Endothelial cell of umbilical vein (primary cell): ENCODE measurements at regions of chr10 and their contacts with region 1.

Region 1: DNA sequence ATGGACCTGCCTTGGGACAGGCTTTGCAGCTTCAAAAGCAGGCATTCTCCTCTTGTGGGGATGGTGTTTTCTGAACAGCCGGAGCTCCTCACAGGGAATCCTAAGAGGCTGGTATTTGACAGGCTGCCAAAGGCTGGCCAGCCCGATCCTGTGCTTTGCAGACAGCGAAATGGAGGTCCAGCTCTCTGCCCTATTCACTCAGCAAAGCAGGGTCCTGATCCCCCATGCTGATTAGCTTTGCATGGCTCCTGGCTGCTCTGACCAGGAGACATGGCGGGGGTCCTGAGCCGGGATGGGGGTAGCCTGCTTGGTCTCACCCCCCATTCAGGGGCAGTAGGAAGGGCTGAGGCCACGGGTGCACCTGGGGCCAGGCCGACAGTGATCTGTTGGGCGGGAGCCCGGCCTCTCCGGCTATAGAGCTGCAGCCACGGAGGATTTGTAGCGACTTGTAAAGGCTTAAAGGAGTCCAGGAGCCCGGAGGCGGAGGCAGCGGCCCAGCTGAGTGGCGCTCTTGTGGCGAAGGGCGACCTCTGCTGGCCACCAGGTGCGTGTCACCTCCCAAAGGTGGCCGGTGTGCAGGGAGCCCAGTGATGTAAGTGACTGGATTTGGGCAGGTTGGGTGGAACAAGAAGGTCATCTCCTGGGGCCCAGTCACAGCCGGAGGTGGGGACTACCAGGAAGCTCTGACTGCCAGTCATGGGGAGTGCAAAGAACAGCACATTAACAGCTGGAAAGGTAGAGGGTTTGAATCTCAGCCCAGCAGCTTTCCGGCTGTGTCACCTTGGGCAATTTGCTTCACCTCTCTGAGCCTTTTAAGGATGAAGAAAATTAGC is 126.5 kb downstream of the ZMIZ1 start:
- DNase-seq: peak; percentile 84
- H3K4me3 ChIP-seq: no peak overlapping the region
- H3K27ac ChIP-seq: no peak overlapping the region
- H3K4me1 ChIP-seq: peaks cover 17% of the 10 kb centered on the region
- H3K27me3 ChIP-seq: no peaks in the 10 kb centered on the region
- CTCF ChIP-seq: peak; percentile 88 to 93
- POLR2A ChIP-seq: no peak

Region 2: DNA sequence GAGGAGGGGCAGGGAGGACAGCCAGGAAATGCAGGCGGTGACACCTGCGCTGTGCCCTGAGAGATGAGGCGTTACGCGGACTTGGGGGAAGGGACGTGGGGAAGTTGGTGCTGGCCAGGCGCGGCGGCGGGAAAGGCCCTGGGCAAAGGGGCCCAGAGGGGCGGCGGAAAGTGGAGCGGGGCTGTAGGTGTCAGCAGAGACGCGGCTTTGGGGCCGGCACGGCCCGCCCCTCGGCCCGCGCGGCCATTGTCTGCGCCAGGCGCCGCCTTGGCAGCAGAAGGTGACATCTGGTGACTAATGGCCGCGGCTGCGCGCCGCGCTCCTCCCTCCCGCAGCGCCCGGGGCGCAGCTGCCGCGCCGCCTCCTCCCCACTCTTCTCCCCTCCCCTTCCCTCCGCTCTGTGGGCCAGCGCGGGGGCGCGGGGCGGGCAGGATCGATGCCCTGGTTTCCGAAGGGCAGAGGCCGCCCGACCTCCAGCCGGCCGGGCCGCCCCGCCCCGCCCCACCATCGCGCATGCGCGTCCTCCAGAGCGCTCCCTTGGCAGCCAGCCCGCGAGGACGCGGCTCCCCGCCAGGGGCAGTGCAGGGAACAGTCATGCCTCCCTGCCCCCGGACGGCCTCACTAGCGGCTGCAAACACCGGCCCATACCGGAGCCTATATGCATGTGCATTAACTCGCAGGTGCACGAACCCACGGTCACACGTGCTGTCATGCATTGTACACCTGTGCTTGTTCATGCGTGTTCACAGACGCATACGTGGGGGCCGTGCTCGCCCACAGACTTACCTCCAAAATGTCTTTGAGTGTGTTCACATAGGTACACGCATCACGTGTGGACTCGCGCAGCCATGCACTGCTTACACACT is 892.1 kb before region 1 on chr10:
- CTCF ChIA-PET with region 1: interaction called, 3 read pairs
- POLR2A ChIA-PET with region 1: no interaction called
- dilution Hi-C with region 1: no loop called
- intact Hi-C with region 1: loop called (anchors 5 kb)
- DNase-seq: peak; percentile 97
- H3K4me3 ChIP-seq: peak overlapping the region; percentile 31 to 59 (median 44)
- H3K27ac ChIP-seq: peak overlapping the region; percentile 76
- H3K4me1 ChIP-seq: peaks cover 7% of the 10 kb centered on the region
- H3K27me3 ChIP-seq: peaks cover 8 to 11% of the 10 kb centered on the region in 2 experiments
- CTCF ChIP-seq: peak; percentile 69 to 87
- POLR2A ChIP-seq: peak; percentile 67

Region 3: GRCh38 chr10:78756604-78757349 is 438.5 kb before region 1 on chr10:
- CTCF ChIA-PET with region 1: interaction called, 3 read pairs
- POLR2A ChIA-PET with region 1: no interaction called
- dilution Hi-C with region 1: no loop called
- intact Hi-C with region 1: loop called (anchors 5 kb)
- DNase-seq: peak; percentile 95
- H3K4me3 ChIP-seq: no peak overlapping the region
- H3K27ac ChIP-seq: peak overlapping the region; percentile 54
- H3K4me1 ChIP-seq: peaks cover 34% of the 10 kb centered on the region
- H3K27me3 ChIP-seq: peaks cover 0 to 6% of the 10 kb centered on the region in 2 experiments
- CTCF ChIP-seq: no peak
- POLR2A ChIP-seq: no peak

Region 4: GRCh38 chr10:79052291-79053080 is 142.8 kb before region 1 on chr10:
- CTCF ChIA-PET with region 1: interaction called, 20 read pairs
- POLR2A ChIA-PET with region 1: no interaction called
- dilution Hi-C with region 1: no loop called
- intact Hi-C with region 1: no loop called
- DNase-seq: peak; percentile 34
- H3K4me3 ChIP-seq: no peak overlapping the region
- H3K27ac ChIP-seq: no peak overlapping the region
- H3K4me1 ChIP-seq: no peaks in the 10 kb centered on the region
- H3K27me3 ChIP-seq: no peaks in the 10 kb centered on the region
- CTCF ChIP-seq: peak; percentile 33 to 66
- POLR2A ChIP-seq: no peak

Region 5: DNA sequence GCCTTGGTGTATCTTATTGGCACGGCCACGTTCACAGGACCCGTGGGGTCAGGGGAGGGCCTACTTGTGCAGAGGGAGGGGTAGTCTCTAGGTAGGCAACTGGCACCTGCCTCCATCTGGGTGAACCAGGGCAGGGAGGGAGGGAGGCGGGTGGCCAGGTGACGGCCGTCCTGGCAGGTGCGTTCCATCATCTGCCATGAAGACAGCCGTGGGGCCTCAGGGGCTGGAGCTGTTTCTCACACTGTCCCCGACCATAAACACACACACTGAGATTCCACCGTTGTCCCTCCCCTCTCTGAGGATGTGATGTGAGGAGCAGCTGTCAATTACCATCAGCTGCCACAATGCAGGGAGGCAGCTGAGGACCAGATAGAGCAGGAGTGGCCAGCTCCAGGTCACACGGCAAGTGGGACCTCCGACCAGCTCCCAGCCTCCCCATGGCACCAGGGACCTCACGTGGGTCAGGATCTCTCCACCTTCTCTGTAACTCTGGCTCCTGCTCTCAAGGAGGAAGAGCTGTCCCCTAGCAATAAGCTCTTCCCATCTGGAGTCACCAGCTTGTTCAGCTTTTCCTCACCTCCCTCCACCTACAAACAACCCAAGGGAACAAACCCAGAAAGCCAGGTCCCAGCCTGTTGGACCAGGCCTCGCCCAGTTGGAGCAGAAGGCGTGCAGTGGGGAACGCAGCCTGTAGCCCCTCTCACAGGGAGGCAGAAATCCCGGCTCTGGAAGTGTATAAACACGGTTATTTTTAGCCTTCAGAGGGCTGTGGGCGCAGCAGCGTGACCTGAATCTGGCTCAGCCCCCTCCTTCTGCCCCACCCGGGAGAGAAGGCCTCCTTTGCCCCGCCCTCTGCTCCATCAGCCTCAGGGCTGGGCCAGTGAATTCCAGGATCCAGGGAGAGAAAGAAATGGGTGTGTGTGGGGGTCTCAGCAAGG is 93.5 kb before region 1 on chr10:
- CTCF ChIA-PET with region 1: interaction called, 13 read pairs
- POLR2A ChIA-PET with region 1: no interaction called
- dilution Hi-C with region 1: no loop called
- intact Hi-C with region 1: no loop called
- DNase-seq: no peak
- H3K4me3 ChIP-seq: no peak overlapping the region
- H3K27ac ChIP-seq: no peak overlapping the region
- H3K4me1 ChIP-seq: peaks cover 17% of the 10 kb centered on the region
- H3K27me3 ChIP-seq: no peaks in the 10 kb centered on the region
- CTCF ChIP-seq: no peak
- POLR2A ChIP-seq: no peak

Region 6: DNA sequence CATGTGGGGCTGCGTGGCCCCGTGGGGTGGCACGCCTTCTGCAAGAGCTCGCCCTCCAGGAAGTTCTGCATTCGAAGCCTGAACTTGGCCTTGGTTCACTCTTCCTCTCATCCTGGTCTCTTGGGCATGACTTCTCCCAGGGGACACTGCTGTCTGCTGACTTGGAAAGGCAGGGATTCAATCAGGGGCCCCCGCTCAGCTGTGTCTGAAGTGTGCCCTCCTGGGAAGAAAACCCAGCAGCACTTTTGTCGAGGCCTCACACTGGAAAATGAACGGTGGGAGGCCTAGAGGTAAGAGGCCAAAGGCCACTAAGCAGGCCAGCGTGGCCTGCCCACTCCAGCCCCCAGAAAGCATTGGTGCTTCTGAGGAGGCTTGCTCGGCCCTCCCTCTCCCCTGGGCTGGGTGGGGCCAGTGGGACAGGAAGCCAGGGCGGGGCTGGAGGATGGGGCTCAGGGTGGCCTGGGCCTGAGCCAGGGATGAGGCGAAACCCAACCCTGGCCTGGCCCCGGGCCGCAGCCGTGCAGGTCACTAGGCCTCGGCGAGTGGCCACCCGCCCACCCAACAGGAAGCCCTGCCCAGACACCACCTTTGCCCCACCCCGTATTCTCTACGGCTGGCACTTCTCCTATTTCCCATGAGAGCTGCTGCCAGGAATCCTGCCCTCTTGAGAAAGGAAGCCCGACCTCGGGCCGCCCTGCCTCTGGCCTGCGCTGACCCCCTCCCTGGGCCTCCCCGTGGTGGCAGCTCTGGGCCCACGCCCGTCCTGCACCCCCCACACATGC is 45.5 kb before region 1 on chr10:
- CTCF ChIA-PET with region 1: interaction called, 13 read pairs
- POLR2A ChIA-PET with region 1: no interaction called
- dilution Hi-C with region 1: no loop called
- intact Hi-C with region 1: no loop called
- DNase-seq: no peak
- H3K4me3 ChIP-seq: no peak overlapping the region
- H3K27ac ChIP-seq: peak overlapping the region; percentile 88
- H3K4me1 ChIP-seq: peaks cover 84% of the 10 kb centered on the region
- H3K27me3 ChIP-seq: no peaks in the 10 kb centered on the region
- CTCF ChIP-seq: no peak
- POLR2A ChIP-seq: peak; percentile 43